ENCODE measurements at regions of chr7 and their contacts with region 1.

Region 1: DNA sequence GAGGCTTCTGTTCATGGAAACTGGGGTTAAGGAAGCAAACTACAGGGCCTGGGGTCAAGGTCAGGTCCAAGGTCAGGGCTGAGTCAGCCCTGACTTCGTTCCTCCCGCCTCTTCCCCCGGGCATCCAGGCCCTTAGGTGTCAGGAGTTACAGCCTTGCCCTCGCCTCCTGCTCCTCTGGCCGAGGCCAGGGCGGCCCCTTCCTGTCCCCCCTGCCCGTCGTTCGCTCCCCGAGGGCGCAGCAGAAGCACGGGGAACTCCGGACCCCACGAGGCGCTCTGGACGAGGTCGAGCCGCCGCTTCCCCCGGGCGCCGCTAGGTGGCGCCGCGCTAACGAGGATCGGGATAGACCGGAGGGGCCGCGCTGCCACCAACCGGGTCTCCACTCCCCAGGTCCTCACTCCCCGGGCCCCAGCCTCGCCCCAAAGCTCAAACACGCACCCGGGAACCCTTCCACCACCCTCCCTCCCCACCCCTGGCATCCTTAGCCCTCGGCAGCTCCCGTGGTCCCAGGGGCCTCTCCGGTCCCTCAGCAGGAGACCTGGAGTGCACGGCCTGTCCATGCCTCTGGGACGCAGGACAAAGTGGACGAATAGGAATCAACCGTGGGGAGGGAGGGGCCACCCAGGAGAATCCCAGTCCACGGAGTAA is 59.2 kb upstream of the MYL10 start:
- DNase-seq: no peak
- ATAC-seq: peak; percentile 97
- H3K4me3 ChIP-seq: peak overlapping the region; percentile 32; the same call in 1 of the 2 replicates
- H3K27ac ChIP-seq: peak overlapping the region; percentile 58
- H3K4me1 ChIP-seq: peaks cover 6% of the 10 kb centered on the region; the same call in 1 of the 2 replicates
- H3K27me3 ChIP-seq: no peaks in the 10 kb centered on the region
- CTCF ChIP-seq: peak; percentile 73 to 97 (median 79)
- EP300 ChIP-seq: no peak
- POLR2A ChIP-seq: no peak
- RAD21 ChIP-seq: peak; percentile 89

Region 2: DNA sequence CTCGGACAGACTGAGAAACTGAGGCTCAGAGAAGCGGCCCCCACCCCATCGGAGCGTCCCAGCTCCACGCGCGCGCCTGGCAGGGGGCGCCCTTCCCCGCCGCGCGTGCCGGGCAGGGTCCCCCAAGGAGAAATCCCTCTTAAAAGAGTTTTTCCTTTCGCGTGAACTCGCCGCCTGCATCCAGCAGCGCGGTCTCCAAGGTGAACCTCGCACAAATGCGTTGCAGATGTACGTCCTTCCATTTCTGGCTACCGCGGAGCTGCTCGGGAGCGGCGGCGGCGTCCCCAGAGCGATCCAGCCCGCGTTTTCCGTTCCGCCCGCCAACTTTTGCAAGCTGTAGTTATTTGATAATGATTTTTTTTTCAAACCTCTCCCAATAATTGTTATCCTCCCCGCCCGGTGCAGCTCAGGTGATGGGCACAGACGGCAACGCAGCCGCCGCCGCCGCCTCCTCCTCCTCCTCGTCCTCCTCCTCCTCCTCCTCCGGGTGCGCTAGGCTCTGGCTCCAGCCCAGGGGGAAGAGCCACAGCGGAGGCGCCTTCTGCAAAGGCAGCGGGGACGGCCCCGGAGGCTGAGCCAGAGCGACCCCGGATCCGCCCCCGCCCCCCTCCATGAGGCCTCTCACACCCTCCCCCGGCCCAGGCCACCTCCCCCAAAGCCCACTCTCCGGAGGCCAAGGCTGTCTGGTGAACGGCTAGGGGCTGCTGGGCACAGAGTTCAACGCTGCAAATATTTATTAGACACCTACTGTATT is 55.1 kb after region 1 on chr7:
- CTCF ChIA-PET with region 1: interaction called, 13 read pairs
- POLR2A ChIA-PET with region 1: no interaction called
- RAD21 ChIA-PET with region 1: interaction called, 9 read pairs
- SMC1A ChIA-PET with region 1: interaction called, 5 read pairs
- in situ Hi-C with region 1: no loop called
- intact Hi-C with region 1: loop called (anchors 2 kb)
- DNase-seq: no peak
- ATAC-seq: peak; percentile 57
- H3K4me3 ChIP-seq: peak overlapping the region; percentile 79
- H3K27ac ChIP-seq: peak overlapping the region; percentile 76
- H3K4me1 ChIP-seq: peaks cover 68% of the 10 kb centered on the region
- H3K27me3 ChIP-seq: no peaks in the 10 kb centered on the region
- CTCF ChIP-seq: peak; percentile 42 to 51 (median 49); a peak in 5 of 6 replicates
- EP300 ChIP-seq: no peak
- POLR2A ChIP-seq: no peak
- RAD21 ChIP-seq: peak; percentile 6; the same call in 1 of the 2 replicates

Region 3: DNA sequence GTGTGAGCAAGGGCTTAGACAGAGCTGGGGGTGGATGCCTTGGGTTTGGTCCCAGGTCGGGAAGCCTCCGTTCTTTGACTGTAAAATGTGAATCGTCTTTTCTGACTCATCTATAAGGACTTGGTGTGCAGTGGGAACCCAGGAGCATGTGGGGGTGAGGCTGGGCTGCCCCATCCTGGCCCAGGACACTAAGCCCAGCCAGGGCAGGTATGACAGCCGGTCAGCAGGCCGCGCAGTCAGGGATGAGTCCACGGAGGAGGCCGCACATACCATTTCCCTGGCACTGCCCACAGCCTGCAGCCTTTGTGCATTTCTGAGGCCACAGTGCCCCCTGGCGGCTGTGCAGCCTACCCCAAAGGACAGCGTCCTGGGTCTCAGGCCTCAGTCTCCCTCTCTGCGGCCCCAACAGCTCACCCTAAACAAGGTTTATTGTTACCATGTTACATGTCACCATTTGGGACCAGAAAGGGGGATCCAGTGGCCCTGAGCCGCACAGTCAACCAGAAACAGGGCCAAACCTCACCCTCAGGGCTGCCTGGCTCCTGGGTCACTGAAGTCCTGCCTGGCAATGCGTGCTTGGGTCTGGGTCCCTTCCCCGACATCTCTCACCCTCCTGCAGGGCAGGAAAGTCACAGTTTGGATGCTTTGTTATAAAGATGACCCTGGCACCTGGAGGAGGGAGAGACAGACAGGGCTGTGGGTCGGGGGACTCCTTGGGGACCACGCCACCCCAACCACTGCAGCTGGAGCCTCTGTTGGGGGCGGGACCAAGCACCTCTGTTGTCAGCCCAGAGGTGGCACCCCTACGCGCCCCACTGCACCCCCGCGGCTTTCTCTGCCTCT is 584.0 kb after region 1 on chr7:
- CTCF ChIA-PET with region 1: interaction called, 5 read pairs
- POLR2A ChIA-PET with region 1: interaction called, 3 read pairs
- RAD21 ChIA-PET with region 1: no interaction called
- SMC1A ChIA-PET with region 1: interaction called, 4 read pairs
- in situ Hi-C with region 1: no loop called
- intact Hi-C with region 1: loop called (anchors 2 kb)
- DNase-seq: no peak
- ATAC-seq: peak; percentile 98
- H3K4me3 ChIP-seq: no peak overlapping the region
- H3K27ac ChIP-seq: no peak overlapping the region
- H3K4me1 ChIP-seq: no peaks in the 10 kb centered on the region
- H3K27me3 ChIP-seq: no peaks in the 10 kb centered on the region; a peak in 1 of 4 replicates
- CTCF ChIP-seq: peak; percentile 92 to 97 (median 95); a peak in 5 of 6 replicates
- EP300 ChIP-seq: no peak
- POLR2A ChIP-seq: no peak
- RAD21 ChIP-seq: peak; percentile 96